Activated CD8-positive, alpha-beta memory T cell treated with anti-CD3 and anti-CD28 coated beads, Interleukin-2, amount 10 ng/mL, durations not matched to agents 7 days and 5 days (primary cell): ENCODE measurements at regions of chr10 and their contacts with region 1.

Region 1: GRCh38 chr10:22712956-22713852 is 1.2 kb downstream of the PIP4K2A start:
- DNase-seq: peak; percentile 56
- ATAC-seq: peak; percentile 26
- H3K4me3 Mint-ChIP-seq: peak overlapping the region; percentile 89
- H3K27ac Mint-ChIP-seq: peak overlapping the region; percentile 90
- H3K4me1 Mint-ChIP-seq: peaks cover 44% of the 10 kb centered on the region
- H3K27me3 Mint-ChIP-seq: no peaks in the 10 kb centered on the region

Region 2: GRCh38 chr10:22657566-22658225 is 55.5 kb before region 1 on chr10:
- CTCF ChIA-PET with region 1: interaction called, 10 read pairs
- DNase-seq: no peak
- ATAC-seq: no peak
- H3K4me3 Mint-ChIP-seq: peak overlapping the region; percentile 53
- H3K27ac Mint-ChIP-seq: peak overlapping the region; percentile 88
- H3K4me1 Mint-ChIP-seq: peaks cover 88% of the 10 kb centered on the region
- H3K27me3 Mint-ChIP-seq: no peaks in the 10 kb centered on the region